ENCODE measurements at regions of chr5 and their contacts with region 1.

Region 1: DNA sequence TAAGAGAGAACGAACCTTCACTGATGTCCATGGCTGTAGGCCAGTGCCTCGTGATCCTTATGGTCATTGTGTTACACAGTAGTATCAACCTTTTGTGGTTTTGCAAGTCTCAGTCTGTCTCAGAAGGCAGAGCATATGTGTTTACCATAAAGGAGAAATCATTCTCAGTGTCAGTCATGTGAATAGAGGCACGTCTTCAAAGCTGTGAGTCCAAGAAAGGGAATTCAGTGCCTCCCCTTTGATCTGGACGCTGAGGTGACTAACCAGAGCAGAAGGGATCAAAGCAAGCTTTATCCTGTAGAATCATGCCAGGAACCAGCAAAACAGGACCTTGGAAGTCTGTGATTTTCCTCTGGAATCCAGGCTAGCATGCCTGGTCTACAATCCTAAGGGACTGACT is 433.9 kb downstream of the DNAH5 start:
- DNase-seq: peak; percentile 25
- H3K4me3 ChIP-seq: no peak overlapping the region
- H3K27ac ChIP-seq: no peak overlapping the region
- H3K4me1 ChIP-seq: peaks cover 12% of the 10 kb centered on the region
- H3K27me3 ChIP-seq: no peaks in the 10 kb centered on the region
- CTCF ChIP-seq: no peak

Region 2: GRCh38 chr5:13540168-13540750 is 29.6 kb after region 1 on chr5:
- dilution Hi-C with region 1: no loop called
- DNase-seq: no peak
- H3K4me3 ChIP-seq: no peak overlapping the region
- H3K27ac ChIP-seq: no peak overlapping the region
- H3K4me1 ChIP-seq: no peaks in the 10 kb centered on the region
- H3K27me3 ChIP-seq: no peaks in the 10 kb centered on the region
- CTCF ChIP-seq: no peak

Region 3: GRCh38 chr5:13957032-13957645 is 446.5 kb after region 1 on chr5:
- dilution Hi-C with region 1: loop called (anchors 25 kb)
- DNase-seq: peak; percentile 11
- H3K4me3 ChIP-seq: no peak overlapping the region
- H3K27ac ChIP-seq: no peak overlapping the region
- H3K4me1 ChIP-seq: peaks cover 3% of the 10 kb centered on the region
- H3K27me3 ChIP-seq: no peaks in the 10 kb centered on the region
- CTCF ChIP-seq: peak; percentile 65 to 71 (median 66)